ENCODE measurements at regions of chr12 and their contacts with region 1.

Region 1: DNA sequence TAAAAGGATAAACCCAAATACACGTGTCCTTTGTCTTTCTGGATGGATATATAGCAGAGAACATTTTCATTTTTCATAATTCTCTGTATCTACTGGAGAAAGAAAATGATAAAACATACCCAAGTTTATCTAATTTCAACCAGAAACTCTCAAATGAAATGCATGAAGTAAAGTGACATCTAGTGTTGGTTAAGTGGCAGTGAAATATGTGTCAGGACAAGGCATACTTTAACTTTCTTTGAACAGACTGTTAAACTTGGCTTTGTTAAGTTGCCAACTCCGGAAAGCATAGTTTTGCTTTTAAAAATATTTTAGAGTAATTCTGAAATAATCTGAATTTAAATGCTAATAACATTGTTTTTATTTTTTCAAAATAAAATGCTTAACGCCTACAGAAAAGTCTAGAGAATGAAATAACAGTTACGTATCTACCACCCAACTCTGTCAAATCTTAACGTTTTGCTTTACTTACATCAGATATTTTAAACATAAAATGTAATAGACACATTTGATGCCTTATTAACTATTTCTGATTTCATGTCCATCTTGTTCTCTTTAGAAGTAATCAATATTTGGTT is 25.2 kb upstream of the NTN4 start:
- DNase-seq: peak; percentile 66
- H3K4me3 ChIP-seq: no peak overlapping the region
- H3K27ac ChIP-seq: no peak overlapping the region
- H3K4me1 ChIP-seq: no peaks in the 10 kb centered on the region
- H3K27me3 ChIP-seq: 0 out of 2 replicates have a peak, but pooled peaks cover 3% of the 10 kb centered on the region

Region 2: DNA sequence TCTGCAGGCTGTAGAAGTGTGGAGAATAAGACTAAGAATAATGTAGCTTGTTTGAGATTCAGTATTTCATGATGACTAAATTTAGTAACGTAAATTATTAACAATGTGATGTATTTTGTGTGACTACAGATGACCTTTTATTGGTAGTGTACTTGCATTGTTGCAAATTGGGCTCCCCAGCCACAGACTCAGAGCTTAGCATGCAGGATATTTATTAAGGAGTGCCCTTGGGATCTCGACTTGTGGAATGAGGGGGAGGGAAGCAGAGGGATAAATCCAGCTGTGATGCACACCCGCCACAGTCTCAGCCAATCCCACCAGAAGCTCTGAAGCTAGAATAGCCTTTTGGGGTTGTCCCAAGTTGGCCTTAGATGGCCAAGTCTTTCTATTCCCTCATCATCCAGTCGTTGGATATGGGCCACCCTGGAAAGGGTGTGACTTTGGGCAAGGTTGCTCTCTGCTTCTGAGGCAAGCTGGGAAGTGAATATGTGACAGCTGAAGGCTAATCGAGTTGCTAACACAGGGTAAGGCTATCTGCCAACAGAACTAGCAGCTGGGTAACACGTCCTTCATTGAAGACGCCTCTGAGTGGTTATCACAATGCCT is 222.4 kb before region 1 on chr12:
- in situ Hi-C with region 1: loop called (anchors 10 kb)
- DNase-seq: no peak
- H3K4me3 ChIP-seq: no peak overlapping the region
- H3K27ac ChIP-seq: no peak overlapping the region
- H3K4me1 ChIP-seq: no peaks in the 10 kb centered on the region
- H3K27me3 ChIP-seq: peaks cover 14% of the 10 kb centered on the region

Region 3: GRCh38 chr12:96132819-96133218 is 317.1 kb after region 1 on chr12:
- in situ Hi-C with region 1: no loop called
- DNase-seq: no peak
- H3K4me3 ChIP-seq: no peak overlapping the region
- H3K27ac ChIP-seq: no peak overlapping the region
- H3K4me1 ChIP-seq: peaks cover 14% of the 10 kb centered on the region
- H3K27me3 ChIP-seq: peaks cover 9% of the 10 kb centered on the region

Measured in GM23248 (cell line).